ENCODE measurements at regions of chr12 and their contacts with region 1.

Region 1: GRCh38 chr12:27305673-27306456 is 26.8 kb upstream of the BMAL2 start:
- DNase-seq: no peak
- H3K4me3 ChIP-seq: no peak overlapping the region
- H3K27ac ChIP-seq: peak overlapping the region in 1 of 4 donors; percentile 45
- H3K4me1 ChIP-seq: peaks cover 0 to 7% (median 0%) of the 10 kb centered on the region in 3 donors
- H3K27me3 ChIP-seq: no peaks in the 10 kb centered on the region
- CTCF ChIP-seq: peak in 4 of 6 experiments; percentile 14 to 60 (median 46)
- POLR2A ChIP-seq: no peak

Region 2: GRCh38 chr12:27024291-27024690 is 281.6 kb before region 1 on chr12:
- intact Hi-C with region 1: loop called (anchors 10 kb)
- DNase-seq: no peak
- H3K4me3 ChIP-seq: peak overlapping the region in 2 of 4 donors; percentile 69 to 72
- H3K27ac ChIP-seq: no peak overlapping the region
- H3K4me1 ChIP-seq: peaks cover 20 to 40% (median 23%) of the 10 kb centered on the region in 3 donors
- H3K27me3 ChIP-seq: no peaks in the 10 kb centered on the region
- CTCF ChIP-seq: no peak
- POLR2A ChIP-seq: no peak

Region 3: GRCh38 chr12:27564612-27565213 is 258.8 kb after region 1 on chr12:
- intact Hi-C with region 1: no loop called
- DNase-seq: no peak
- H3K4me3 ChIP-seq: peak overlapping the region in 2 of 4 donors; percentile 12 to 31
- H3K27ac ChIP-seq: peak overlapping the region; percentile 26 to 66 (median 62)
- H3K4me1 ChIP-seq: peaks cover 6 to 40% (median 12%) of the 10 kb centered on the region in 3 donors
- H3K27me3 ChIP-seq: no peaks in the 10 kb centered on the region
- CTCF ChIP-seq: no peak
- POLR2A ChIP-seq: no peak

Measured in esophagus squamous epithelium (tissue), 5 donors.